OCI-LY7 (cell line): ENCODE measurements at regions of chr19 and their contacts with region 1.

Region 1: DNA sequence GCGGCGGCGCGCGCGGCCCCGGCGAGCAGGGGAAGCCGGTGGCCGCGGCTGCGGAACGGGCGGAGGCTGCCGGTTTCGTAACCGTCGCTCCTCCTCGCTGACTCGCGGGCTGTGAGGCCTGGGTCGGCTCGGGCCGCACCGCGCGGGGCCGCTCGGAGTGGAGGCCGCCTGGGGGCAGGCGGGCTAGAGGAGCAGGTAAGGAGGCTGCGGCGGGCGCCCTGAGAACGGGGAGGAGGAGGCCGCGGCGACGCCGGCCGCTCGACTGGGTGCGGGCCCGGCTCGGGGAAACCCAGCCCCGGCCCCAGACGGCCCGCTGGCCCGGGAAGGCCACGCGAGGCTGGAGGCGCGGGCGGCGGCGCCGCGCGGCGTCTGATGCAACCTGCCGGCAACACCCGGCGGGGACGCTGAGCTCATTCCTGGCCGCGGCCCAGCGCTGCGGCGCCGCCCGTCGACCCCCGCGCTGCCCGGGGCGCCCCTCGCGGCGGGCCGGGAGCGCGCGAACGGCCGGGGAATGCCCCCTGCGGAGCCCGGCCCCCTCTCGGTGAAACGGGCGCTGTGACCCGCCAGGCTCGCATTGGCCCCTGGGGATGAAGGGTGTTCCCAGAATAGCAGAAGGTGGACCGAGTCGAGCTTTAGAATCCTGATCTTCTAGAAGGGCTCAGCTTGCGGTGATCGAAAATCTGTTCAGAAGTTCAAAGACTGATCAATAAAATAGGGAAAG is at the start of gene CEBPG:
- DNase-seq: peak; percentile 75
- H3K4me3 ChIP-seq: peak within 1 kb of the TSS; percentile 80
- H3K27ac ChIP-seq: peak within 1 kb of the TSS; percentile 86
- H3K4me1 ChIP-seq: peaks cover 38% of the 10 kb centered on the region
- CTCF ChIP-seq: peak; percentile 37; the same call in 1 of the 2 replicates
- total RNA-seq, gene CEBPG: 44.9 and 46.1 TPM in 2 replicates

Region 2: DNA sequence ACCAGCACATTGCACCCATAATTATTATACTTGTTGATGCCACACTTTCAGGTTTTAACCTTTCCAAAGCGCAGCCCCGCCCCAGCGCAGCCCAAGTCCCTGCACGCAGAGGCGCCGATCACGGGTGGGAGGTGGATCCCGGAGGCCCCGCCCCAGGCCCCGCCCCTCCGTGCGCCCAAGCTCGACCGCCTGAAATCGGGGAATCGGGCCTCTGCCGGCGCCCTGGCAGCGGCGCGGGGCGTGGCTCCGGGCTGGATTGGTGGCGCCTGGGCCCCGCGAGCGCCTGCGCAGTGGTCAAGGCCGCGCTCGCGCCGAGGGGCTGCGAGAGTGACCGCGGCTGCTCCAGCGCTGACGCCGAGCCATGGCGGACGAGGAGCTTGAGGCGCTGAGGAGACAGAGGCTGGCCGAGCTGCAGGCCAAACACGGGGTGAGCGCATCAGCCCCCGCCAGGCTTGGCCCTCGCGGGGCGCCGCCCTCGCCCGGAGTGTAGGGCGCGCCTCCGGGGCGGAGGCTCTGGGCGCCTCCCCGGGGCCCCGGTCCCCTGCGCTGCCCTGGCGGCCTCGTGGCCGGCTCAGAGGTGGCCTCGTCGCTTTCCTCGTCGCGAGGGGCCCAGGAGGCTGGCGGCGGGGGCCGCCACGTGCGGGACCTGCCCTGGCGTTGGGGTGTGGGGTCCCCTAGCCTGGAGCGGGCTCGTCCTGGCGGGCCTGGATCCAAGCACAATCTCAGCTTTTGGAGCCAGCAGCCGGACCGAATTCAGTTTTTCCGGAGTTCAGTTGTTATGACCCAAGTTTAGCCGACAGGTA is 792.8 kb before region 1 on chr19 and contains the start of gene PDCD5:
- CTCF ChIA-PET with region 1: no interaction called
- POLR2A ChIA-PET with region 1: no interaction called
- intact Hi-C with region 1: loop called (anchors 5 kb)
- DNase-seq: peak; percentile 95
- H3K4me3 ChIP-seq: peak within 1 kb of the TSS; percentile 93
- H3K27ac ChIP-seq: peak within 1 kb of the TSS; percentile 32
- H3K4me1 ChIP-seq: peaks cover 10% of the 10 kb centered on the region
- CTCF ChIP-seq: no peak
- total RNA-seq, gene PDCD5: 162 and 200 TPM in 2 replicates

Region 3: DNA sequence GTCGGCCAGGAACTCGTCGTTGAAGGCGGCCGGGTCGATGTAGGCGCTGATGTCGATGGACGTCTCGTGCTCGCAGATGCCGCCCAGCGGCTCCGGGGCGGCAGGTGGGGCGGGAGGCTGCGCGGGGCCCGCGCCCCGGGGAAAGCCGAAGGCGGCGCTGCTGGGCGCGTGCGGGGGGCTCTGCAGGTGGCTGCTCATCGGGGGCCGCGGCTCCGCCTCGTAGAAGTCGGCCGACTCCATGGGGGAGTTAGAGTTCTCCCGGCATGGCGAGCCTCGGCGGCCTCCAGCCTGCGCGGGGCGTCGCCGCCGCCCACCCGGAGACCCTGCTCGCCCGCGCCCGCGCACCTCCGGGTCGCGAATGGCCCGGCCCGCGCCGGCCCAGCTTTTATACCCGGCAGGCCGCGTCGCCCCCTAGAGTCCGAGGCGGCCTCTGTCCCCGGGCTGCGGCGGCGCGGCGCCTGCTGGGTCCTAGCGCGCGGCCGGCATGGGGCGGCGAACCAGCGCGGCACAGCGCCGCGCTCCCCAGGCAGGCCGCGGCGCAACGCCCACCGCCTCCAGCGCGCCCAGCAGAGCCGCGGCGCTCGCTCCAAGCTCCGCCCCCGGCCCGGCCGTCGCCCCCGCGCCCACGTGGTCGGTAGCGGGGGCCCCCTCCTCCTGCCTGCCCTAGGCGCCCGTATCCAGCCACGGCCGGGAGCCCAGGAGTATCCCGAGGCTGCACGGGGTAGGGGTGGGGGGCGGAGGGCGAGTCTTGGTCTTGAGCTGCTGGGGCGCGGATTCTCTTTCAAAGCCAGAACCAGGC is 71.5 kb before region 1 on chr19 and contains the start of gene CEBPA:
- CTCF ChIA-PET with region 1: no interaction called
- POLR2A ChIA-PET with region 1: no interaction called
- intact Hi-C with region 1: loop called (anchors 2 kb)
- DNase-seq: peak; percentile 84
- H3K4me3 ChIP-seq: peak within 1 kb of the TSS; percentile 70
- H3K27ac ChIP-seq: no peak within 1 kb of the TSS
- H3K4me1 ChIP-seq: peaks cover 4% of the 10 kb centered on the region
- CTCF ChIP-seq: peak; percentile 63
- total RNA-seq, gene CEBPA: 2.1 and 2.8 TPM in 2 replicates

Region 4: GRCh38 chr19:33390110-33390907 is 16.4 kb after region 1 on chr19:
- CTCF ChIA-PET with region 1: no interaction called
- POLR2A ChIA-PET with region 1: no interaction called
- intact Hi-C with region 1: no loop called
- DNase-seq: no peak
- H3K4me3 ChIP-seq: no peak overlapping the region
- H3K27ac ChIP-seq: no peak overlapping the region
- H3K4me1 ChIP-seq: no peaks in the 10 kb centered on the region
- CTCF ChIP-seq: no peak

Region 5: DNA sequence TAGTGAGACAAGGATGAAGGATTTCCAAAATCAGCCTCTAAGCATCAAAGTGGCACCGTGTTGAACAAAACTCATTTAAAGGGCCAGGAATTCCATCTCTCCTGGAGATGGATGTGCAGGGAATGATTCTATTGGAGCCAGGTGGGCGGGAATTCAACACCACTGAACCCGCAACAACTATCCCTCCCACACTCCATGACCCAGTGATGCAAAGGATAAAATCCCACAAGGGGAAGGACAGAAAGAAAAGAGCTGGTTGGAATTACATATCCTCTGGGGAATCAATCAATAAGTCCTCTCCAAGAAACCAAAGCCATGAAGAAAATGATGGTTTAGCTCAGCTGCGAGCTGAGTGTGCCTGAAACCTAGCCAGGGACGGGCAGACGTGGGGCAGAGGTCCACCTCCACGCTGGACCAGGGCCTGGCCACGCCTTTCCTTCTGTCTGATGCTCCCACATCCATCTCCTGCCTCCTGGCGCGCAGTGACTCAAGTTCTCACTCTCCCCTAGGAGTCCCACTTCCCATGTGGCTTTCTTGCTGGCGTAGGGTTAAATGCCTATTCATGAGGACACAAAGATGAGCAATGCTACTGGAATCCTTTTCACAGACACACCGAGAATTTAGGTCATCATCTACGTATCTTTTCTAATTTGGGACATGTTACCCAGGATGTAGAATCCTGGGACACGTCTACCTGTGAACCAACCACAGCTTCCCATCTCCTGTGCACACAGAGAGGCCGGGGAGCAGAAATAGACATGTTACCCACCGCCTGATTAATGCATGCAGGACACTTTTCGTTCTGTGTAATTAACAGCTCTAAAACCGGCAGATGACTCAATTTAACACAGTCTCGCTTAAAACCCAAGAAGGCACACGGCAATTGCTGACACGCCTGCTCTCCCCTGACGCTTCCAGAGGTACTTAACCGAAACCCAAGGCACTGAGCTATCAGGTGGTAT is 99.1 kb after region 1 on chr19:
- CTCF ChIA-PET with region 1: no interaction called
- POLR2A ChIA-PET with region 1: no interaction called
- intact Hi-C with region 1: no loop called
- DNase-seq: no peak
- H3K4me3 ChIP-seq: no peak overlapping the region
- H3K27ac ChIP-seq: no peak overlapping the region
- H3K4me1 ChIP-seq: no peaks in the 10 kb centered on the region
- CTCF ChIP-seq: no peak